B cell (primary cell): ENCODE measurements at regions of chr11 and their contacts with region 1.

Region 1: DNA sequence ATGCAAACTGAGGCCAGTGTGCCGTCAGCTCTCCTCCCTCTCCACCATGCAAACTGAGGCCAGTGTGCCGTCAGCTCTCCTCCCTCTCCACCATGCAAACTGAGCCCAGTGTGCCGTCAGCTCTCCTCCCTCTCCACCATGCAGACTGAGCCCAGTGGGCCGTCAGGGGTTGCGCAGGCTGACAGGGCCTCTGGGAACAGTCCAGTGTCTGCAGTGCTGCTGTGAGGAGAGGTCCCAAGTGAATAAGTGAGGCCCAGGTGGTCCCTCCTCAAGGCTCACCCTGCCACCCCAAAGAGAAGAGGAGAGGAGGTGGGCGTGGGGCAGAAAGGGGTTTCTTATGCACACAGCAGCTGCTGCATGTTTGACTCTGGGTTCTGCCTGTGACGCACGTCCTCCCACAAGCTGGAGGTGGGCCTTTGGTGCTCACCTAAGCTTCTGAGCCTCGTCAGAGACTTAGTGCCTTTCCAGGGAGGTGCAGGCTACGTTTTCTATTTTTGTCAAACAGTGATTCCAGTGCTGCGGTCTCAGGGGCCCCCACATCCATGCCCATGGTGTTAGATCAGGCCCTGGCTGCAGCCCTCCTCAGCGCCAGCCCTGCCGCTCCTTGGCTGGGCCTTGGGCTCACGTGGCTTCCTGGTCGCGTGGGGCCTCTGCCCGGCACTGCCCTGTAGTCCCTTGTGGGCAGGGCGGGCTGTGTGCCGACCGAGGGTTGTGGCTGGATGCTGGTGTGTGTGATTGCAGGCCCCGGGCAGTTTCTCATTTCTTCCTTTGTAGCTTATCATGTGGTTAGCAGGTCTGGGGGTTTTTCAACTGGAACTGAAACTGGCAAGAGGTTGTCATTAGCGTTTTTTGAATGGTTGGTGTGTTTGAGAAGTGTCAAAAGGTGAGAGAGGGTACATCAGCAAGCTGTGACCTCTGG is 7.1 kb downstream of the TPCN2 start:
- DNase-seq: peak; percentile 94
- ATAC-seq: peak; percentile 87
- H3K4me3 ChIP-seq: peak overlapping the region in 2 of 5 experiments; percentile 15 to 49
- H3K4me3 Mint-ChIP-seq: peak overlapping the region; percentile 61
- H3K27ac ChIP-seq: peak overlapping the region; percentile 92 to 98
- H3K27ac Mint-ChIP-seq: peak overlapping the region; percentile 89
- H3K4me1 ChIP-seq: peaks cover 30 to 64% of the 10 kb centered on the region in 2 donors
- H3K4me1 Mint-ChIP-seq: peaks cover 47% of the 10 kb centered on the region
- H3K27me3 ChIP-seq: no peaks in the 10 kb centered on the region
- H3K27me3 Mint-ChIP-seq: no peaks in the 10 kb centered on the region
- CTCF ChIP-seq: no peak

Region 2: GRCh38 chr11:68925611-68926010 is 130.2 kb before region 1 on chr11:
- CTCF ChIA-PET with region 1: no interaction called
- POLR2A ChIA-PET with region 1: interaction called, 10 read pairs
- intact Hi-C with region 1: no loop called
- DNase-seq: no peak
- ATAC-seq: no peak
- H3K4me3 ChIP-seq: no peak overlapping the region
- H3K4me3 Mint-ChIP-seq: no peak overlapping the region
- H3K27ac ChIP-seq: no peak overlapping the region
- H3K27ac Mint-ChIP-seq: no peak overlapping the region
- H3K4me1 ChIP-seq: peaks cover 7 to 11% of the 10 kb centered on the region in 2 donors
- H3K4me1 Mint-ChIP-seq: peaks cover 12% of the 10 kb centered on the region
- H3K27me3 ChIP-seq: no peaks in the 10 kb centered on the region
- H3K27me3 Mint-ChIP-seq: no peaks in the 10 kb centered on the region
- CTCF ChIP-seq: no peak